ENCODE measurements at regions of chr6 and their contacts with region 1.

Region 1: DNA sequence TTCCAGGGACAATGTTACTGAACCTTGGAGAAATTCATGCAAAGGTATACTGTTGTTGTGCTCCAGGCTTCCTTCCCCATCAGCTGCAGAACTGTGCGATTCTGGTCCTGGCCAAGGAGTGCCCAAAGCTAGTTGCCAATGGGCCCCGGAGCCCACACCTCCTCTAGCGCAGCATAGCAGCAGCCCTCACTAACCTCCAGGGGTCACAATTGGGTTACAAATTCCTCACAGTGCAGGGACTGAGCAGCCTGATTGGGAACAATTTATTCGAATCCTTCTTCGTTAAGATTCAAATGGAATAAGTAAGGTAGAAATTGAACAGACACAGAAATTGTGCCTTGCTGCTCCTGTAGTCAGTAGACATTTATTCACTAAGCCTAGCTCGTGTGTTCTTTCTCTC is 284.9 kb downstream of the PRKN start:
- DNase-seq: no peak
- ATAC-seq: peak; percentile 74 to 84 (median 77)
- H3K4me3 ChIP-seq: no peak overlapping the region
- H3K27ac ChIP-seq: no peak overlapping the region
- H3K4me1 ChIP-seq: peaks cover 0 to 2% (median 0%) of the 10 kb centered on the region in 12 donors
- H3K27me3 ChIP-seq: no peaks in the 10 kb centered on the region
- CTCF ChIP-seq: peak; percentile 22 to 54 (median 43)
- POLR2A ChIP-seq: no peak

Region 2: GRCh38 chr6:162512744-162513143 is 70.1 kb after region 1 on chr6:
- intact Hi-C with region 1: no loop called
- DNase-seq: no peak
- ATAC-seq: no peak
- H3K4me3 ChIP-seq: no peak overlapping the region
- H3K27ac ChIP-seq: no peak overlapping the region
- H3K4me1 ChIP-seq: peaks cover 0 to 16% (median 4%) of the 10 kb centered on the region in 12 donors
- H3K27me3 ChIP-seq: no peaks in the 10 kb centered on the region
- CTCF ChIP-seq: no peak
- POLR2A ChIP-seq: no peak

Region 3: GRCh38 chr6:162560891-162561290 is 118.2 kb after region 1 on chr6:
- intact Hi-C with region 1: no loop called
- DNase-seq: no peak
- ATAC-seq: no peak
- H3K4me3 ChIP-seq: no peak overlapping the region
- H3K27ac ChIP-seq: no peak overlapping the region
- H3K4me1 ChIP-seq: no peaks in the 10 kb centered on the region
- H3K27me3 ChIP-seq: no peaks in the 10 kb centered on the region
- CTCF ChIP-seq: no peak
- POLR2A ChIP-seq: no peak

Region 4: DNA sequence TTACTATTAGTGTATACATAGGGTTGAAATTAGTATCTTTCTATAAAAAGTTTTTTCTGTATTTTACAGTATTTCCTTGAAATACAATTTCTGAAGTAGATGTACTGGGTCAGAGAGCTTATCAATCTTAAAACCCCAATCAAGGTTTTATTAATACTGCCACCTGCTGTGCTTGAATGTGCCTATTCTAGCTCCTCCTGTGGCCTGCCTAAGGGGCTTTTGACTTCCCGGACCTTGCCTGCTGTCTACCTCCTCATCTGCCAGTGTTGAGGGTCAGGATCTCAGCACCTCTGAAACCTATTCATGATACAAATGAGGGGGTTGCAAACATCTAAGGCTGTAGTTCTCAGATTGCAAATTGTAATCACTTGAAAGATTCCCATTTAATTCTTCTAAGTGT is 294.3 kb after region 1 on chr6:
- intact Hi-C with region 1: loop called in 7 of 10 experiments (anchors 5 to 10 kb)
- DNase-seq: no peak
- ATAC-seq: peak in 3 of 4 donors; percentile 51 to 70 (median 53)
- H3K4me3 ChIP-seq: no peak overlapping the region
- H3K27ac ChIP-seq: no peak overlapping the region
- H3K4me1 ChIP-seq: peaks cover 0 to 6% (median 0%) of the 10 kb centered on the region in 12 donors
- H3K27me3 ChIP-seq: no peaks in the 10 kb centered on the region
- CTCF ChIP-seq: peak in 11 of 12 donors; percentile 7 to 62 (median 49)
- POLR2A ChIP-seq: no peak

Measured in heart left ventricle (tissue), 16 donors.